ENCODE measurements at regions of chr11 and their contacts with region 1.

Region 1: DNA sequence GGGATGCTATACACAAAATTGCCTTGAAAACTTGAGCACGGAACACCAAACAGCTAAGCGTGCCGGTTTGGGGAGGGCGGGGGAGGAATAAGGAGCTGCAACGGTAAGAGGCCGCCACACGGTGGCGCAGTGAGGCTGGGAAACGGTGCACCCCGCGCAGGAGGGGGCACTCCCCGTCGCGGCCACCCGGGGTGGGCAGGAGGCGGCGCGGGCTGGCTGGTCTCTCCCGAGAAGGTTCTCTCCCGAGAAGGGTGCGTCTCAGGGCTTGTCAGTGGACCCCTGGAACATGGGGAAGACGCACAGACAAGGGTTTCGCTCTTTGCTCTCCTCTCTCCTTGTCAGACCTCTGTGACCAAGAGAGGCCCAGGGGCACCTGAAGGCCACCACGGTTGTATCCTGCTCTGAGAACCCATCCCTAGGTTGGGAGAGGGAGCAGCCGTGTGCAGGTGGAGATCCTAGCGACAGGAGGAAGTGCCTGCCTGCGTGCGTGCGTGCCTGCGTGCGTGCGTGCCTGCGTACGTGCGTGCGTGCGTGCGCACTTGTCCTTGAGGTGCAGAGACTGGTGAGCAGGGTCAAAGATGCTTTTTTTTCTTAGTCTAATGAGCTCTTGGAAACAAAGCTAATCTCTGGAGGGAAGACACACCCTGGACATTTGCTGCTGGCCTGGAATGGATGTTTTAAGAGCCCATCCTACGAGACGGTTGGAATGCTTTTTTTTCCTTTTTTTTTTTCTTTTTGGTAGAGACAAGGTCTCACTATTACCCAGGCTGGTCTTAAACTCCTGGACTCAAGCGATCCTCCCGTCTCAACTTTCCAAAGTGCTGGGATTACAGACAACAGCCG is 18.1 kb upstream of the JAM3 start:
- DNase-seq: peak; percentile 80
- ATAC-seq: peak; percentile 91
- H3K4me3 Mint-ChIP-seq: no peak overlapping the region
- H3K27ac Mint-ChIP-seq: no peak overlapping the region
- H3K4me1 Mint-ChIP-seq: peaks cover 11% of the 10 kb centered on the region
- H3K27me3 Mint-ChIP-seq: peaks cover 8% of the 10 kb centered on the region
- CTCF ChIP-seq: peak; percentile 98

Region 2: GRCh38 chr11:133956650-133957633 is 93.8 kb before region 1 on chr11 and contains the start of gene IGSF9B:
- CTCF ChIA-PET with region 1: interaction called, 13 read pairs
- POLR2A ChIA-PET with region 1: no interaction called
- intact Hi-C with region 1: no loop called
- DNase-seq: peak; percentile 94
- ATAC-seq: peak; percentile 91
- H3K4me3 Mint-ChIP-seq: peak within 1 kb of the TSS; percentile 89
- H3K27ac Mint-ChIP-seq: peak within 1 kb of the TSS; percentile 92
- H3K4me1 Mint-ChIP-seq: peaks cover 44% of the 10 kb centered on the region
- H3K27me3 Mint-ChIP-seq: peaks cover 12% of the 10 kb centered on the region
- CTCF ChIP-seq: no peak
- total RNA-seq, gene IGSF9B: 124 to 136 TPM

Region 3: GRCh38 chr11:134040386-134041302 is 10.1 kb before region 1 on chr11:
- CTCF ChIA-PET with region 1: interaction called, 15 read pairs
- POLR2A ChIA-PET with region 1: no interaction called
- intact Hi-C with region 1: no loop called
- DNase-seq: no peak
- ATAC-seq: no peak
- H3K4me3 Mint-ChIP-seq: no peak overlapping the region
- H3K27ac Mint-ChIP-seq: no peak overlapping the region
- H3K4me1 Mint-ChIP-seq: peaks cover 17% of the 10 kb centered on the region
- H3K27me3 Mint-ChIP-seq: no peaks in the 10 kb centered on the region
- CTCF ChIP-seq: no peak

Region 4: DNA sequence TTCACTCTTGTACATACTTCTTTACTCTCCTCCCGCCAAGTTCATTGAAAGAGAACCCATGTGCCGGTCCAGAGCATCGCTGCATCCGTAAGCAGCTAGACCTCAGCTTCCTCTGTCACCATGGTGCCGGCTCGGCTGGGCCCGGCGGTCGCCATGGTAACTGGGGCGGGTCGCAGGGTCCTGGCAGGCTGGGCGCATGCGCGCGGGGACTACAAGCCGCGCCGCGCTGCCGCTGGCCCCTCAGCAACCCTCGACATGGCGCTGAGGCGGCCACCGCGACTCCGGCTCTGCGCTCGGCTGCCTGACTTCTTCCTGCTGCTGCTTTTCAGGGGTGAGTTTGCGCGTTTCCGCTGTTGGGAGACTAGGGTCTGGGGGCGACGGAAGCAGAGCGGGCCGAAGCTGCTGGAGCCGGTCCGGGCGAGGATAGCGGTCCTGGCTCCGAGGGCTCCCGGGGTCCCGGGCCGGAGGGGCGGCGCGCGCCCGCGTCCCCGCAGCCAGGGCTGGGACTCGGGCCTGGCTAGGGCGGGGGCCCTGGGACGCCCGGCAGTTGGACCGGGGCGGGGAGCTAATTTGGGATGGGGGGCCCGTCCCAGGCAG is 18.2 kb after region 1 on chr11 and contains the start of gene JAM3:
- CTCF ChIA-PET with region 1: interaction called, 27 read pairs
- POLR2A ChIA-PET with region 1: interaction called, 3 read pairs
- intact Hi-C with region 1: no loop called
- DNase-seq: peak; percentile 97
- ATAC-seq: peak; percentile 97
- H3K4me3 Mint-ChIP-seq: peak within 1 kb of the TSS; percentile 93
- H3K27ac Mint-ChIP-seq: peak within 1 kb of the TSS; percentile 81
- H3K4me1 Mint-ChIP-seq: peaks cover 20% of the 10 kb centered on the region
- H3K27me3 Mint-ChIP-seq: peaks cover 11% of the 10 kb centered on the region
- CTCF ChIP-seq: no peak
- total RNA-seq, gene JAM3: 24.9 to 26.8 TPM

Region 5: GRCh38 chr11:134139873-134140331 is 89.1 kb after region 1 on chr11:
- CTCF ChIA-PET with region 1: interaction called, 36 read pairs
- POLR2A ChIA-PET with region 1: interaction called, 3 read pairs
- intact Hi-C with region 1: loop called (anchors 2 kb)
- DNase-seq: peak; percentile 73
- ATAC-seq: peak; percentile 93
- H3K4me3 Mint-ChIP-seq: no peak overlapping the region
- H3K27ac Mint-ChIP-seq: no peak overlapping the region
- H3K4me1 Mint-ChIP-seq: peaks cover 18% of the 10 kb centered on the region
- H3K27me3 Mint-ChIP-seq: no peaks in the 10 kb centered on the region
- CTCF ChIP-seq: peak; percentile 80

Region 6: GRCh38 chr11:134253188-134253993 is 202.6 kb after region 1 on chr11 and contains the starts of genes ACAD8 and THYN1:
- CTCF ChIA-PET with region 1: no interaction called
- POLR2A ChIA-PET with region 1: no interaction called
- intact Hi-C with region 1: no loop called
- DNase-seq: peak; percentile 98
- ATAC-seq: peak; percentile 99
- H3K4me3 Mint-ChIP-seq: peak within 1 kb of the TSS; percentile 99
- H3K27ac Mint-ChIP-seq: peak within 1 kb of the TSS; percentile 94
- H3K4me1 Mint-ChIP-seq: peaks cover 34% of the 10 kb centered on the region
- H3K27me3 Mint-ChIP-seq: no peaks in the 10 kb centered on the region
- CTCF ChIP-seq: no peak
- total RNA-seq, gene ACAD8: 13.1 to 13.8 TPM
- total RNA-seq, gene THYN1: 70.1 to 75.3 TPM